Right ventricle myocardium inferior (tissue), 1 donor: ENCODE measurements at regions of chr2 and their contacts with region 1.

Region 1: GRCh38 chr2:121736462-121737341 is at the start of gene NIFK:
- DNase-seq: peak; percentile 100
- ATAC-seq: peak; percentile 99
- total RNA-seq, gene NIFK: 18.3 TPM

Region 2: GRCh38 chr2:121755236-121756111 is 18.8 kb after region 1 on chr2 and contains the start of gene TSN:
- intact Hi-C with region 1: loop called (anchors 1 kb)
- DNase-seq: peak; percentile 99
- ATAC-seq: peak; percentile 100
- total RNA-seq, gene TSN: 32.1 TPM